ENCODE measurements at regions of chr11 and their contacts with region 1.

Region 1: DNA sequence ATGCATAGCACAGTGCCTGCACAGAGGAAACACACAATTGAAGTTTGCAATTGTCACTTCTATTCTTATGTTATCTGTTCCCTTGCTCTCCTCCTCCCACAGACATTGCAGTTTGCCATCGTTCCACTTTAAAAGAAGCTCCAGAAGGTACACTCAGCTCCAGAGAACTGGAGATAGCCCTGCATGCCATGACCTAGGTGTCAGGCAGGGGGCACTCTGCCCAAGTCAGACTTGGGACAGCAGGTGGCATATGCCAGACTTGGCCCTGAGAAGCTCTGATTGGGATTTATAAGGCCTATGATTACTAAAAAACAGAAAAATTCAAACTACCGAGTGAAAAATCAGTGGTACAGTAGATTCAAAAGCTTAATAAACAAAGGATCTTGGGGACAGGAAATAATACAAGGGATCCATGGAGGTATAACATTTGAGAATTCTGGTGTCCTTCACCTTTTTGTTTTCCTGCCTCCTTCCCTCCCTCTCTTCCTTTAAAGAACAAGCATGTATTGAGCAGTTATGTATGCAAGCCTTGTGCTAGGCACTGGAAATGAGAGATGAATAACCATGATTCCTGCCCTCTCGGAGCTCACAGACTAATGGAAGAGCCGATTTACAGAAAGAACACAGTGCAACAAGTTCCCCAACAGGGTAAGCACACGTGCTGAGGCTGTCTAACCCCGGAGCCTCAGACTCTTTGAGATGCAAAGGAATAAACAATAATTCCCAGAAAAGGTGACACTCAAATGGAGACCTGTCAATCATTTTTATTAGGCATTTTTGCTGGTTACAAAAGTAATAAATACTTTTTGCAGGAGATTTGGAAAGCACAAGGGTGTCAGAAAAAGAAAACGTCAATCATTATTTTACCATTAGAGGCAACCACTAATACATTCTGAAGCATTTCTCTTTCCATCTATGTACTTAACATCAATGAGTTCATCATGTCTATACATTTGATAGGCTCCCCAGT is 39.8 kb downstream of the TENM4 start:
- DNase-seq: peak; percentile 40
- H3K4me3 ChIP-seq: no peak overlapping the region
- H3K27ac ChIP-seq: no peak overlapping the region
- H3K4me1 ChIP-seq: no peaks in the 10 kb centered on the region
- H3K27me3 ChIP-seq: no peaks in the 10 kb centered on the region
- CTCF ChIP-seq: peak; percentile 60

Region 2: GRCh38 chr11:79493555-79494171 is 92.7 kb after region 1 on chr11:
- intact Hi-C with region 1: loop called (anchors 2 kb)
- DNase-seq: peak; percentile 75
- H3K4me3 ChIP-seq: no peak overlapping the region
- H3K27ac ChIP-seq: no peak overlapping the region
- H3K4me1 ChIP-seq: no peaks in the 10 kb centered on the region
- H3K27me3 ChIP-seq: no peaks in the 10 kb centered on the region
- CTCF ChIP-seq: peak; percentile 73

Measured in colonic mucosa (tissue), 4 donors.